HEK293 (cell line): ENCODE measurements at regions of chr11 and their contacts with region 1.

Region 1: GRCh38 chr11:6443269-6444003 is 2.6 kb upstream of the HPX start:
- H3K4me3 ChIP-seq: no peak overlapping the region
- H3K27ac ChIP-seq: no peak overlapping the region
- H3K4me1 ChIP-seq: no peaks in the 10 kb centered on the region
- CTCF ChIP-seq: 0 out of 2 replicates have a peak, but pooled peaks have one; percentile 25

Region 2: DNA sequence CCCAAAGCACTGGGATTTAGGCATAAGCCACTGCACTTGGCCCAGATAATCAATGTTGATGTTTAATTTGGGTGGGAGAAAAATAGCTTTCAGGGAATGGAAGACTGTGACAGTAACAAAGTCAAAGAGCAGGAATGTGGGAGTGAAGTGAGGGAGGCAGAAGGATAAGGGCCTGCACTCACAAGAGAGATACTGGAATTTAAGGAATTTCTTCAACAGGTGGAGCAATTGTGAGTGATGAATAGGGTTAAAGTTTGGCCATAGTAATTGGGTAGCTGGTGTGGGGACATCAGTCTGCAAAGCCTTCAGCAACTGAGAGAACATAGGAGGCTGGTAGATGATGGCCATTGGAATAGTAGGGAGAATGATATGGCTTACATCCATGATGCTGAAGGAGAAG is 15.9 kb before region 1 on chr11:
- CTCF ChIA-PET with region 1: interaction called, 43 read pairs
- POLR2A ChIA-PET with region 1: no interaction called
- H3K4me3 ChIP-seq: no peak overlapping the region
- H3K27ac ChIP-seq: no peak overlapping the region
- H3K4me1 ChIP-seq: no peaks in the 10 kb centered on the region
- CTCF ChIP-seq: no peak

Region 3: GRCh38 chr11:6455070-6455469 is 11.6 kb after region 1 on chr11:
- CTCF ChIA-PET with region 1: interaction called, 23 read pairs
- POLR2A ChIA-PET with region 1: no interaction called
- H3K4me3 ChIP-seq: no peak overlapping the region
- H3K27ac ChIP-seq: no peak overlapping the region
- H3K4me1 ChIP-seq: no peaks in the 10 kb centered on the region
- CTCF ChIP-seq: no peak

Region 4: DNA sequence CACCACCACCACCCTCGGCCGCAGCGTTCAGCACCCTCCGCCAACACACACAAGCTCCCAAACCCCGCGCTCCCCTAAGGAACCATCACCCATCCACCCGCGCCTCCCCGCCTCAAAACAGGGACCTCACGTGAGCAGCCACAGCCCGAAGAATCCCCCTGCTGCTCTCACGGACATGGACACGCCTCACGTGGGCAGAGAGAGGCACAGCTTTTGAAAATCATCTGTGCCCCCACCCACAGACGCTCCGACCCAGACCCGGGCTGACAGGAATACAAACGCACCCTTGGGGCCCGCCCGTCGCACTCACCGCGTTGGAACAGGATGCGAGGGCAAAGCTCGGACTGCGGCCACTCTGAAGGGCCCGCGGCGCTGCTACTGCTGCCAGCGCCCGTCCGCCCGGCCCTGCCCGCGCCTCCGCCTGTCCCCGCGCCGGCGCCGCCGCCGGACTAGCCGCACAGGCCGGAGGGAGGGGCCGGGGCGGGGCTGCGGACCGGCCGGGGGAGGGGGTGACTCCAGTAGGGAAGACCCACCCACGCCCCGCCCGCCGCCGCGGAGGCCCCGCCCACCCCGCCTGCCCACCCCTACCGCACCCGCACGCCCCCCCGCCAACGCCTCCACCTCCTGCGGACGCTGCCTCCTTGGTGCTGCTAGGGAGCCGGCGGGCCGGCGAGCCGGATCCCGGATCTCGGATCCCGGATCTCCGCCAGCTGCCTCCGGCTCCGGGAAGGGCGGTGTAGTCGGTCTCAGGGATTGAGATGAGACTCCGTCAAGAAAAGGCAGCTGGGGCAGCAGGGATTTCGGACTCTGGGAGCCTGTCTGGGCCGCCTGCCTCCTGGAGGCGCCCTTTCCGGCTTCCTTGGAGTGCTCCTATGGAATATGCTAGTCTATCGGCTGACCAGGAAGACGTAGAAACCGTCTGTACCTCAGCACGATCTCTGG is 30.3 kb after region 1 on chr11 and contains the start of gene TRIM3:
- CTCF ChIA-PET with region 1: interaction called, 12 read pairs
- POLR2A ChIA-PET with region 1: interaction called, 4 read pairs
- H3K4me3 ChIP-seq: peak within 1 kb of the TSS; percentile 74
- H3K27ac ChIP-seq: peak within 1 kb of the TSS; percentile 50; the same call in 1 of the 2 replicates
- H3K4me1 ChIP-seq: no peaks in the 10 kb centered on the region
- CTCF ChIP-seq: peak; percentile 40; the same call in 1 of the 2 replicates

Region 5: GRCh38 chr11:6505577-6506240 is 62.3 kb after region 1 on chr11:
- CTCF ChIA-PET with region 1: interaction called, 16 read pairs
- POLR2A ChIA-PET with region 1: no interaction called
- H3K4me3 ChIP-seq: no peak overlapping the region
- H3K27ac ChIP-seq: no peak overlapping the region
- H3K4me1 ChIP-seq: no peaks in the 10 kb centered on the region
- CTCF ChIP-seq: no peak